Lower leg skin (tissue), 4 donors: ENCODE measurements at regions of chr20 and their contacts with region 1.

Region 1: GRCh38 chr20:19161336-19161735 is 51.1 kb upstream of the SLC24A3 start:
- DNase-seq: no peak
- H3K4me3 ChIP-seq: no peak overlapping the region
- CTCF ChIP-seq: no peak
- POLR2A ChIP-seq: no peak

Region 2: GRCh38 chr20:17985388-17986018 is 1175.8 kb before region 1 on chr20:
- intact Hi-C with region 1: loop called (anchors 10 kb)
- DNase-seq: no peak
- H3K4me3 ChIP-seq: no peak overlapping the region
- CTCF ChIP-seq: no peak
- POLR2A ChIP-seq: no peak

Region 3: GRCh38 chr20:18943542-18943941 is 217.8 kb before region 1 on chr20:
- intact Hi-C with region 1: loop called (anchors 5 kb)
- DNase-seq: no peak
- H3K4me3 ChIP-seq: no peak overlapping the region
- CTCF ChIP-seq: no peak
- POLR2A ChIP-seq: no peak